ENCODE measurements at regions of chr17 and their contacts with region 1.

Region 1: DNA sequence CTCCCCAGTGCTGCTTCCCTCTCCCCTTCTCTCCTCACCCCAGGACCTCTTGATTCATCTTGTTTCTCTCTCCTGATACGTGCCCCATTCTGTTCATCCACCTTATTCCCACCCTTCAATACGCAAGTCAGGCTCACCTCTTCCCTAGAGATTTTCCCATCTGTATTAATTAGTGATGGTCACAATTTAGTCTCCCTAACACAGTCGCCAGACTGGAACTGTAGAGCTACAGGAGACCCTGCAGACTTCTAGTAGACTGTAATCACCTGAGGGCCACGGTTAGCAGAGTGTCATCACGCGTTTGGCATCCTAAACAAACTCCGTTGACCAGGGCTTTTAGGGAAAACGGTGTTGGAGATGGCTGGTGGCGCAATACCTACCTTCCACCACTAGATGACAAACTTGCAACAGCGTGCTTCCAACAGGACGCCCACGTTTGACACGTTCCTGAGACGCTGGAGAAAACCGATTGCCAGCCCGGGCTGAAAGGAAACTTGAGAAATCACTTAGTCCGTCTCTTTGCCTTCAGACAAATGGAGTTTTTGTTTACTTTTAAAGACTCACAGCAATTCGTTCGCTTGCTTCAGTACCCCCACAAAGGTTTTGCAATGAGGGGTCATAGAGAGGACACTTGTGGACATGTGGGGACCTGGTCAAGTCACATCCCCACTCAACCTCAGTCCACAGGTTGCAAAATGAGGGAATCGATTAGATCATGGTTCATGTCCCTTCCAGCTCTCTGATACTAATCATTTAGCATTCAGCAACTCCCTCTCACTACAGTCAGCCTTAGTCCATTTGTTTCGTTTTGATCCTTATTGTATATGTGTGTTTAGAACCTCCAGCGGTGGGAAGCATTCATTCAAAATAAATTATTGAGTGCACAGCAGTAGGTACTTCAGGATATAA is 20.6 kb downstream of the MYL4 start:
- DNase-seq: peak; percentile 73 to 90 (median 74)
- ATAC-seq: peak; percentile 96
- H3K4me3 ChIP-seq: no peak overlapping the region
- H3K4me1 ChIP-seq: peaks cover 8% of the 10 kb centered on the region
- CTCF ChIP-seq: peak; percentile 97

Region 2: GRCh38 chr17:47279062-47279736 is 49.4 kb after region 1 on chr17:
- intact Hi-C with region 1: no loop called
- DNase-seq: peak in 1 of 3 donors; percentile 47
- ATAC-seq: peak; percentile 56
- H3K4me3 ChIP-seq: no peak overlapping the region
- H3K4me1 ChIP-seq: peaks cover 18% of the 10 kb centered on the region
- CTCF ChIP-seq: no peak

Region 3: DNA sequence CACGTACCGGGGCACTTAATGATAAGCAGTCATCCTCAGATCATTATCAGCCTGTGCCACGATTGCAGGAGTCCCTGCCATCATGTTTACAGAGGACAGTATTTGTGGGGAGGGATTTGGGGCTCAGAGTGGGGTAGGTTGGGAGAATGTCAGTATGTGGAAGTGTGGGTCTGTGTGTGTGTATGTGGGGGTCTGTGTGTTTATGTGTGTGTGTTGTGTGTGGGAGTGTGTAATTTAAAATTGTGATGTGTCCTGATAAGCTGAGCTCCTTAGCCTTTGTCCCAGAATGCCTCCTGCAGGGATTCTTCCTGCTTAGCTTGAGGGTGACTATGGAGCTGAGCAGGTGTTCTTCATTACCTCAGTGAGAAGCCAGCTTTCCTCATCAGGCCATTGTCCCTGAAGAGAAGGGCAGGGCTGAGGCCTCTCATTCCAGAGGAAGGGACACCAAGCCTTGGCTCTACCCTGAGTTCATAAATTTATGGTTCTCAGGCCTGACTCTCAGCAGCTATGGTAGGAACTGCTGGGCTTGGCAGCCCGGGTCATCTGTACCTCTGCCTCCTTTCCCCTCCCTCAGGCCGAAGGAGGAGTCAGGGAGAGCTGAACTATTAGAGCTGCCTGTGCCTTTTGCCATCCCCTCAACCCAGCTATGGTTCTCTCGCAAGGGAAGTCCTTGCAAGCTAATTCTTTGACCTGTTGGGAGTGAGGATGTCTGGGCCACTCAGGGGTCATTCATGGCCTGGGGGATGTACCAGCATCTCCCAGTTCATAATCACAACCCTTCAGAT is 80.6 kb after region 1 on chr17:
- intact Hi-C with region 1: loop called (anchors 2 to 5 kb)
- DNase-seq: no peak
- ATAC-seq: peak; percentile 26
- H3K4me3 ChIP-seq: no peak overlapping the region
- H3K4me1 ChIP-seq: no peaks in the 10 kb centered on the region
- CTCF ChIP-seq: no peak

Region 4: DNA sequence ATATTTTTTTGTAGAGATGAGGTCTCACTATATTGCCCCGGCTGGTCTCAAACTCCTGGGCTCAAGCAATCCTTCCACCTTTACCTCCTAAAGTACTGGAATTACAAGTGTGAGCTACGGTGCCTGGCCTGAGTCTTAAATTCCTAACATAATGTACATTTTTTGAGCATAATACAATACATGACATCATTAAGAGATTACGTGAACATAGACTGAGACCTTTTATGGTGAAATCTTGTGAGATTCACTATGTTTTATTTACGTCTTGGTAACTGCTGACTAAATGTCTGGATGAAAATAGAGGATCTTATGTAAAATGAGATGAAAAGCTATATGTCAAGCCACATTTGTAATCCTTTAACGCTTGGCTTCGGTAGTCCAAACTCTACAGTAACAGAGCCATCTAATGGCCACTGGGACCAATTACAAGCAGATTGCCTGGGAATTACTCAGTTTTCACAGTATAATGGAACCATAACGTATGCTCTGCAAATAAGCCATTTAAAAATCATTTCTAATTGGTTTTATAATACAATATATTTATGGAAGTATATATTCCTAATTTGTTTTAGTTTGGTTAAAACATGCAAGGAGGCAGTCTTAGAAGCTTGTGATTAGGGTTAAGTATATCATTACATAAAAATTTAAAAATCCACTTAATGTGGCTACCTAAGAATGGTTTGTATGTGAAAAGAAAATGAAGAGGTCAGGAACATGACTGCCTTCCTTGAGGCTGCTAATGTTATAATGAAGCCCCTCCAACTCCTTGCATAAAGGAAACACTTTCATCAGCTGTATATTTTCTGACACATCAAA is 85.9 kb after region 1 on chr17:
- intact Hi-C with region 1: loop called (anchors 2 to 5 kb)
- DNase-seq: peak in 1 of 3 donors; percentile 67
- ATAC-seq: peak; percentile 89
- H3K4me3 ChIP-seq: no peak overlapping the region
- H3K4me1 ChIP-seq: peaks cover 12% of the 10 kb centered on the region
- CTCF ChIP-seq: peak; percentile 60

Region 5: GRCh38 chr17:47615766-47616424 is 386.1 kb after region 1 on chr17:
- intact Hi-C with region 1: loop called in 1 of 2 experiments (anchors 10 kb)
- DNase-seq: no peak
- ATAC-seq: peak; percentile 75
- H3K4me3 ChIP-seq: no peak overlapping the region
- H3K4me1 ChIP-seq: no peaks in the 10 kb centered on the region
- CTCF ChIP-seq: no peak